ENCODE measurements at regions of chr4 and their contacts with region 1.

Region 1: GRCh38 chr4:37970487-37971101 is 10.4 kb downstream of the PTTG2 start:
- DNase-seq: peak; percentile 73 to 86 (median 85)
- H3K4me3 ChIP-seq: no peak overlapping the region
- H3K4me3 Mint-ChIP-seq: no peak overlapping the region
- H3K27ac ChIP-seq: peak overlapping the region in 1 of 2 donors; percentile 39
- H3K27ac Mint-ChIP-seq: peak overlapping the region; percentile 56 to 89 (median 87)
- H3K4me1 ChIP-seq: peaks cover 6 to 12% of the 10 kb centered on the region in 2 donors
- H3K4me1 Mint-ChIP-seq: peaks cover 19% of the 10 kb centered on the region
- H3K27me3 ChIP-seq: no peaks in the 10 kb centered on the region
- H3K27me3 Mint-ChIP-seq: peaks cover 0 to 3% (median 0%) of the 10 kb centered on the region in 3 donors
- CTCF ChIP-seq: peak; percentile 79

Region 2: GRCh38 chr4:38023347-38024205 is 53.0 kb after region 1 on chr4:
- intact Hi-C with region 1: loop called in 1 of 2 experiments (anchors 5 kb)
- DNase-seq: peak; percentile 67 to 78 (median 70)
- H3K4me3 ChIP-seq: peak overlapping the region; percentile 33 to 72 (median 72)
- H3K4me3 Mint-ChIP-seq: peak overlapping the region; percentile 62 to 87
- H3K27ac ChIP-seq: peak overlapping the region in 1 of 2 donors; percentile 80
- H3K27ac Mint-ChIP-seq: peak overlapping the region; percentile 85 to 95 (median 92)
- H3K4me1 ChIP-seq: peaks cover 10 to 16% of the 10 kb centered on the region in 2 donors
- H3K4me1 Mint-ChIP-seq: peaks cover 21% of the 10 kb centered on the region
- H3K27me3 ChIP-seq: no peaks in the 10 kb centered on the region
- H3K27me3 Mint-ChIP-seq: peaks cover 0 to 2% (median 0%) of the 10 kb centered on the region in 3 donors
- CTCF ChIP-seq: no peak

Region 3: GRCh38 chr4:38539501-38539900 is 568.9 kb after region 1 on chr4:
- intact Hi-C with region 1: no loop called
- DNase-seq: no peak
- H3K4me3 ChIP-seq: no peak overlapping the region
- H3K4me3 Mint-ChIP-seq: no peak overlapping the region
- H3K27ac ChIP-seq: no peak overlapping the region
- H3K27ac Mint-ChIP-seq: no peak overlapping the region
- H3K4me1 ChIP-seq: peaks cover 9 to 10% of the 10 kb centered on the region in 2 donors
- H3K4me1 Mint-ChIP-seq: peaks cover 7% of the 10 kb centered on the region
- H3K27me3 ChIP-seq: no peaks in the 10 kb centered on the region
- H3K27me3 Mint-ChIP-seq: peaks cover 0 to 8% (median 0%) of the 10 kb centered on the region in 3 donors
- CTCF ChIP-seq: no peak

Measured in CD14-positive monocyte (primary cell).